Endothelial cell of umbilical vein (primary cell): ENCODE measurements at regions of chr10 and their contacts with region 1.

Region 1: DNA sequence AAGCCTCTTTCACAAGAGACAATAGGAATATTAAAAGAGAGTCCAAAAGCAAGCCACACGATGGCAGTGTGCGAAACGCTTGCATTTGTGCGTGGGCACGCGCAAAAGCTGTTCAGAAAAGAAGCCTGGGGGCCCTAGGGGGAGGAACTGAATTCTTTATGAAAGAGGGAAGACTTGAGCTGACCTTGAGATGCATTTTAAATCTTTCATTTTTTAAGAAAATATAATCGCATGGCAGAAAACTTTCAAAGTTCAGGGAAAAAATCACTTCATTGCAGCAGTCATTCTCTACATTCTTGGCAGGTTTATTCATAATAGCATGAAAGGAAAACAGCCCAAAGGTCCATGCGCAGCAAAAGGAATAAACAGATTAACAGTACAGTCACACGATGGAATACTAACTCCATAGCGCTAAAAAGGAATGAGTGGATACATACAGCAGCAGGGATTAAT is 206.5 kb upstream of the PRKCQ start:
- DNase-seq: peak; percentile 76
- H3K4me3 ChIP-seq: no peak overlapping the region
- H3K27ac ChIP-seq: no peak overlapping the region
- H3K4me1 ChIP-seq: no peaks in the 10 kb centered on the region
- H3K27me3 ChIP-seq: peaks cover 3 to 10% of the 10 kb centered on the region in 2 experiments
- CTCF ChIP-seq: peak; percentile 35 to 46
- POLR2A ChIP-seq: no peak

Region 2: DNA sequence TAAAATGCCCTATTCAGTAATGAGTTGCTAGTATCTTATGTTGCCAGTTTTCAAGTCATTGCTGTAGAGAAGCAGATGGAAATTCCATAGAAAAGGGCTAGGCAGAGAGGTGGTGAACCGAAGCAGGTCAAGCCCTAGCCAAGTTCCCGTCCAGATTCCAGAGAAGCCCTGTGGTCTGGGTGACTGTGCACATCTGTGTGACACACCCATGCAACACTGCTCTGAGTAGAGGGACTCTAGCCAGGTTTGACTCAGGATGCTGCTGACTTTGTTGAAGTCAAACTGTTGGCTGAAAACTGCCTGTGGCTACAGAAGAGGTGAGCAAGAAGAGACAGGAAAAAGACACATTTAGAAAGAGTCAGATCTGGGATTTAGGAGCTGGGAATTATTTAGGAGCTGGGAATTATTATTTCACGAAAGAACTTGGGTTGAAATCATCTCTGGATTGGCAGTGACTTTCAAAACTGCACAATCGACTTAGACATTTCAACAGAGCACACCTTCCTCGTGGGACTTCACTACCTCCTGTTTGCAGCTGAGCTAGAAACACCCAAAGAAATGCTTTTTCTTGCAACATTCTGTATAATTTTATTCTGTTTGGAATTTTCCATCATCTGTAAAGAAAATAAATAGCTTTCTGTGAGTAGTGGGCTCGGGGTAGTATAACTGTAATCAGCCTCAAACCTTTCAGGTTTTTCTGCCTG is 57.4 kb before region 1 on chr10:
- CTCF ChIA-PET with region 1: interaction called, 10 read pairs
- POLR2A ChIA-PET with region 1: no interaction called
- dilution Hi-C with region 1: no loop called
- intact Hi-C with region 1: no loop called
- DNase-seq: peak; percentile 31
- H3K4me3 ChIP-seq: no peak overlapping the region
- H3K27ac ChIP-seq: peak overlapping the region; percentile 46
- H3K4me1 ChIP-seq: peaks cover 24% of the 10 kb centered on the region
- H3K27me3 ChIP-seq: no peaks in the 10 kb centered on the region
- CTCF ChIP-seq: no peak
- POLR2A ChIP-seq: peak; percentile 2

Region 3: DNA sequence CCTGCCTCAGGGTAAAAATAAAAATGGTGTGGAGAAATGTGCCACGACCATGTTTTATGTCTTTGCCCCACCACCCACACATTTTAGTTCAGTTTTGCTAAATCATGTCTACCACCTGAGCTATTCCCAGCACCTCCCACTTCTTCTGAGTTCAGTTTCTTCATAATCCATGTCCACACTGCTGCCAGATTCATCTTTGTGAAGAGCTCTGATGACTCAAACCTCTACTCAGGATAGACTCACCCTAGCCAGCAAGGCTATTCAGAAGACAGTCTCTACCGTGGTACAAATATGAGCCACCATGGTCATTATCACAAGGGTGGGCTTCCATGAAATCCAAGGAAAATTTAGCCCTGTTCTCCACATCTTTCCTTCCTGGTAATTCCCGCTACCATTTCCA is 24.5 kb after region 1 on chr10:
- CTCF ChIA-PET with region 1: no interaction called
- POLR2A ChIA-PET with region 1: no interaction called
- dilution Hi-C with region 1: no loop called
- intact Hi-C with region 1: no loop called
- DNase-seq: no peak
- H3K4me3 ChIP-seq: no peak overlapping the region
- H3K27ac ChIP-seq: no peak overlapping the region
- H3K4me1 ChIP-seq: no peaks in the 10 kb centered on the region
- H3K27me3 ChIP-seq: no peaks in the 10 kb centered on the region
- CTCF ChIP-seq: no peak
- POLR2A ChIP-seq: no peak